ENCODE measurements at regions of chr2 and their contacts with region 1.

Region 1: DNA sequence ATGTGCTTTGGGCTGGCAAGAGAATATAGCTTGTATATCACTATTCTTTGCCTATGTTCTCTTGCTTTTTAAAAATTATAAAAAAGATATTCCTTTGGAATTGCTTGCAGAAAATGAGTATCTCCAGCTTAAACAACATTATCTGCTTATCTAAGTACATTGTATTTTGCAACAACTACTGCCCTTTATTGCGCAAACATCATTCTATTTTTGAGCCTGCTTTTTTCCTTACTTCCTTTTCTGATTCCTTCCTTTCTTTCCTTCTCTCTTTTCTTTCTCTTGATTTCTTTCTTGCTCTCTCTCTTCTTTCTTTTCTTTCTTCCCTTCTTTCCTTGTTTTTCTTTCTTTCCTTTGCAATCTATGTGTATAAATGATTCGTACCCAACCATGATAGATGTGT is 74.0 kb downstream of the UNC80 start:
- DNase-seq: no peak
- H3K4me3 ChIP-seq: no peak overlapping the region
- H3K27ac ChIP-seq: no peak overlapping the region
- H3K4me1 ChIP-seq: no peaks in the 10 kb centered on the region
- H3K27me3 ChIP-seq: no peaks in the 10 kb centered on the region
- CTCF ChIP-seq: no peak

Region 2: DNA sequence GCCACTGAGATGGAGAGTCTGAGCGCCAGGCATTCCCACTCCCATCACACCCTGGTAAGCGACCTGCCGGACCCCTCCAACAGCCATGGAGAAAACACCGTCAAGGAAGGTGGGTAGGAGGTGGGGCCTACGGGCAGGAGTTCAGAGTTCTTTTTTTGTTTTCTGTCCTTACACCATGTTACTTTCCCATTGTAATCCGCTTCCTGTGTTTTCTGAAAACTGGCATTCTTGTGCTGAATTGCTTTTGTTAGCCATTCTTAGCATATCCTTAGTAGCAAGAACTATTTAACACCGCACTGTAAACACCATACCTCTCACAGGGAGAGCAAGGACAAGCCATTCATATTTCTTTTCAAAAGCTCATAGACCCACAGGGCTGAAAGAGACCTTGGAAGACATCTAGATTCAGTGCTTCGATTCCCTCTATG is 27.8 kb before region 1 on chr2:
- CTCF ChIA-PET with region 1: no interaction called
- POLR2A ChIA-PET with region 1: interaction called, 10 read pairs
- intact Hi-C with region 1: no loop called
- DNase-seq: no peak
- H3K4me3 ChIP-seq: no peak overlapping the region
- H3K27ac ChIP-seq: no peak overlapping the region
- H3K4me1 ChIP-seq: no peaks in the 10 kb centered on the region
- H3K27me3 ChIP-seq: no peaks in the 10 kb centered on the region
- CTCF ChIP-seq: no peak